Endothelial cell of umbilical vein (primary cell): ENCODE measurements at regions of chr5 and their contacts with region 1.

Region 1: DNA sequence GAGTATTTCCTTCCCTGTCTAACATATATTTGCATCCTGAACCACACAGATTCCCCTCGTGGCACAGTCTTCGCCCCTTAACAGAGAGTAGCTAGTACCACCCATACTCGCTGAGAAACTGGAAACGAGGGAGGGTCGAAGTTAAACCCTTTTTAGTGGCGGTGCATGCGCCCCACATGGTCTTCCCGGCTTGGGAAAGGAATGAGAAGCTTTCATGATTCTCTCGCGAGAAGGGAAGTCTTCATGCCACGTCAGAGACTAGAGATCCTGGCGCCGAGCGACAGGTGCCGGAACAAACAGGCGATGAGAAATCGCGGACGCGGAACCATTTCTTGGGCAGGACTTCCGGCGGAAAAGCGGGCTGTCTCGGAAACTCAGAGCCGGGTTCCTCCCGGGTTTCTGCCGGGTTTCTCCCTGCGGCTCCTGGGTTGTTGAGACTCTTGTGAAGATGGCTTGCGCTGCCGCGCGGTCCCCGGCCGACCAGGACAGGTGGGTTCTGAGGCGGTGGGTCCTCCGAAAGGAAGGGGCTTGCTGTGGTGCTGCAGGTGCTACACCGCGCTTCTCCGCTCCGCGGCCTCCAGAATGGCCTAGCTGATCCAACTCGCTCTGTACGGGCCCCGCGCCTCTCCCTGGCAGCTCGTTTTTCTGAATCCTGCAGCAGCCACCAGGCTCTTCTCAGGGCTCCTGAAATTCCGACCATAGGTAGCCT is at the start of gene SRP19:
- DNase-seq: peak; percentile 97
- H3K4me3 ChIP-seq: peak within 1 kb of the TSS; percentile 63 to 98 (median 97)
- H3K27ac ChIP-seq: peak within 1 kb of the TSS; percentile 81
- H3K4me1 ChIP-seq: peaks cover 18% of the 10 kb centered on the region
- H3K27me3 ChIP-seq: no peaks in the 10 kb centered on the region
- CTCF ChIP-seq: no peak
- POLR2A ChIP-seq: peak; percentile 92
- total RNA-seq, gene SRP19: 69.2 and 69.4 TPM in 2 replicates

Region 2: GRCh38 chr5:112691758-112692157 is 169.3 kb before region 1 on chr5:
- CTCF ChIA-PET with region 1: no interaction called
- POLR2A ChIA-PET with region 1: no interaction called
- dilution Hi-C with region 1: no loop called
- intact Hi-C with region 1: loop called (anchors 5 kb)
- DNase-seq: peak; percentile 43
- H3K4me3 ChIP-seq: no peak overlapping the region
- H3K27ac ChIP-seq: no peak overlapping the region
- H3K4me1 ChIP-seq: no peaks in the 10 kb centered on the region
- H3K27me3 ChIP-seq: peaks cover 10 to 12% of the 10 kb centered on the region in 2 experiments
- CTCF ChIP-seq: peak; percentile 33 to 41
- POLR2A ChIP-seq: no peak

Region 3: DNA sequence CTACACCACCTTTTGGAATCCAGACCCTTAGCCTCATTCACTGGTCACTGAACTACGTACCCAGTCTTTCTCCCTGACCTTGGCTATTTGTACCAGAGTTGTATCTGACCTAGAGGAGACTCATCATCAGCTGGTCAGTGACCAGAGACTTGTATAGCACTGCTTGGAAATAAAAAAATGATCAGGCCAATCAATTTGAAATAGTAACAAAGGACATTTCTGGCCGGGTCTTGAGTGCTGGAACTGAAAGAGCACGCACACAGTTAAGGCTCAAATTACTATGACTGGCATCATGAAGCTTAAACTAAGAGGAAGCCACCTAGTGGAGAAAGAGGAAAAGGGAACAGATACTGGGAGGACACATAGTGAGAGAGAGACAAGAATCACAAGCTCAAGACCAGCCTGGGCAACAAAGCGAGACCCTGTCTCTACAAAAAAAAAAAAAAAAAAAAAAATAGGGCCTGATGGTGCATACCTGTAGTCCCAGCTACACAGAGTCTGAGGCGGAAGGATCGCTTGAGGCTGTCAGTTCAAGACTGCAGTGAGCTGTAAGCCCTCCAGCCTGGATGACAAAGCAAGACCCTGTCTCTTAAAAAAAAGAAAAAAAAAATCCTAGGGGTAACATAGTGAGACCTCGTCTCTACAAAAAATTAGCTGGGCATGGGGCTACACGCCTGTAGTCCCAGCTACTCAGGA is 12.8 kb before region 1 on chr5:
- CTCF ChIA-PET with region 1: interaction called, 50 read pairs
- POLR2A ChIA-PET with region 1: interaction called, 3 read pairs
- dilution Hi-C with region 1: no loop called
- intact Hi-C with region 1: no loop called
- DNase-seq: peak; percentile 68
- H3K4me3 ChIP-seq: no peak overlapping the region
- H3K27ac ChIP-seq: no peak overlapping the region
- H3K4me1 ChIP-seq: no peaks in the 10 kb centered on the region
- H3K27me3 ChIP-seq: no peaks in the 10 kb centered on the region
- CTCF ChIP-seq: peak; percentile 52 to 69
- POLR2A ChIP-seq: no peak

Region 4: DNA sequence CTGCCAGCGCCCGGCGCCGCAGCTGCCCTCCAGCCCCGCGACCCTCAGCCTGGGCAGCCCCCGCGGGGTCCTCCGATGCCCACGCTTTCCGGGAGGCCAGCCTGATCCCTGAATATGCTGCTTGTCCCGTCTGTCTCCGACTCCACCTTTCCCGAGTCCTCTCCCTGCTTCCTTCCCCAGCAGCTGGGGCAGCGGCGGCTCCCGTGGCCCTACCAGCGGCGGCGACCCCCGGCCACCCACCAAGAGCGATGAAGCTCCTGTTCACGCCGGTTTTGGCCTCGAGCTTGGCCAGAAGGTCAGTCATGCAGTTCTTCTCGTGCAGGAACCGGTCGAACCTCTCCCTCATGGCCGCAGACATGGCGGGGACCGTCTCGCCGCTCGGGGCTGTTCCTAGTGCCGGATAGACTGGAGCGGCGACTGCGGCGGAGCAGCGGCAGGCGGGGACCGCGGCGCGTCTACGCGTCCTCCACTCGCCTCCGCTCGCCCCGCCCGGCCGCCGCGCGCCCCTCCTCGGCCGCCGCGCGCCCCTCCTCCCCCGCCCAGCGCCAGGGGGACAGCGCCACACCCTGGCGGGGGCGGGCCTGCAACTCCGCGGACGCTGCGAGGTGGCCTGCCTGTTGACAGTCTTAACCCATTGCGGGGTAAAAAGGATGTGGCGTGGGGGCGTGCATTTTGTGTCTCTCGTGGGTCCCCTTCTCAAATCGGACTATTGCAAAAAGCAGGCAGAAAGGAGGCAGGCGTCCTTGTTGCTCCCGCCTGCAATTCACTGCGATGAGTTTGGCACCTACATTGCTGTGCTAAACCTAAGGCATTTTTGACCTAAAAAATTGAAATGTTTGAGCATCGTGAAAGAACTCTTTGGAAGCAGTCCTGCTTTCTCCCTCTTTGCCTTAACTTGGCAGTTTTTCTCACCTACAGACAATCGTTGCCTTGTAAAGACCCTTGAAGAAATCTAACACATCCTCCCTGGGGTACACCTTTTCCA is 61.0 kb after region 1 on chr5 and contains the start of gene REEP5:
- CTCF ChIA-PET with region 1: interaction called, 3 read pairs
- POLR2A ChIA-PET with region 1: no interaction called
- dilution Hi-C with region 1: no loop called
- intact Hi-C with region 1: loop called (anchors 1 kb)
- DNase-seq: peak; percentile 83
- H3K4me3 ChIP-seq: peak within 1 kb of the TSS; percentile 53 to 99 (median 78)
- H3K27ac ChIP-seq: peak within 1 kb of the TSS; percentile 66
- H3K4me1 ChIP-seq: peaks cover 8% of the 10 kb centered on the region
- H3K27me3 ChIP-seq: no peaks in the 10 kb centered on the region
- CTCF ChIP-seq: peak; percentile 74 to 80
- POLR2A ChIP-seq: peak; percentile 89
- total RNA-seq, gene REEP5: 84.5 and 98.0 TPM in 2 replicates

Region 5: GRCh38 chr5:112976432-112977309 is 115.6 kb after region 1 on chr5 and contains the start of gene DCP2:
- CTCF ChIA-PET with region 1: interaction called, 3 read pairs
- POLR2A ChIA-PET with region 1: no interaction called
- dilution Hi-C with region 1: no loop called
- intact Hi-C with region 1: loop called (anchors 1 kb)
- DNase-seq: peak; percentile 99
- H3K4me3 ChIP-seq: peak within 1 kb of the TSS; percentile 98 to 99 (median 99)
- H3K27ac ChIP-seq: peak within 1 kb of the TSS; percentile 48
- H3K4me1 ChIP-seq: peaks cover 21% of the 10 kb centered on the region
- H3K27me3 ChIP-seq: no peaks in the 10 kb centered on the region
- CTCF ChIP-seq: no peak
- POLR2A ChIP-seq: peak; percentile 97
- total RNA-seq, gene DCP2: 49.1 and 60.0 TPM in 2 replicates